Activated CD8-positive, alpha-beta T cell treated with anti-CD3 and anti-CD28 coated beads, Interleukin-2, amount 10 ng/mL, durations not matched to agents 7 days and 5 days (primary cell): ENCODE measurements at regions of chr7 and their contacts with region 1.

Region 1: DNA sequence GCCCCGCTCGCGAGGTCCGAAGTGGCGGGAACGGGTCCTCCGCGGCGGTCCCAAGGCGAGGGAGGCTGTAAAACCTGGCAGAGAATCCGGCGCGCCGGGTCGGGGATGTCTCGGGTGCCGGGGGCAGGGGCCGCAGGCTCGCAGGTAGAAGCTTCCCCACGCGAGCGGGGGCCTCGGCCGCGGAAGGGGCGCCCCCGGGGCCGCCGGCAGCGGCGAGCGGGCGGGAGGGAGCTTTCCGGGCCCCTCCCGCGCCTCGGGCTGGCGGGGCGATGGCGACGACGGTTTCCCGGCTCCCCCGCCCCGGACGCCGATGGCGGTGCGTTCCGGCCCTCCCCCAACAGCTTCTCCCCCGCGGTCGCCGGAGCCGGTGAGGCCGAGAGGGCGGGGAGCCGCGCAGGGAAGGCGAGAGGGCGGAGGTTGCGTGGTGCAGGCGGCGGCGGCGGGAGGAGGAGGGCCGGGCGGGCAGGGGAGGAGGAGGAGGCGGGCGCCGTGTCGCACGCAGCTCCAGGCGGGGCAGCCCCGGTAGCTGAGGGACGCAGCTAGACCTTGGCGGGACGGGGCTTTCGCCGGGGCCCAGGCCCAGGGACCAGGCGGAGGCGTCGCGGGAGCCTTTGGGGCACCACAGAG is at the start of gene CUL1:
- DNase-seq: peak; percentile 85
- ATAC-seq: peak; percentile 87
- H3K4me3 Mint-ChIP-seq: peak within 1 kb of the TSS; percentile 90
- H3K27ac Mint-ChIP-seq: peak within 1 kb of the TSS; percentile 90
- H3K4me1 Mint-ChIP-seq: peaks cover 52% of the 10 kb centered on the region
- H3K27me3 Mint-ChIP-seq: peaks cover 11% of the 10 kb centered on the region
- total RNA-seq, gene CUL1: 55.8 to 57.6 TPM

Region 2: GRCh38 chr7:148676291-148676690 is 22.2 kb before region 1 on chr7:
- CTCF ChIA-PET with region 1: no interaction called
- POLR2A ChIA-PET with region 1: no interaction called
- DNase-seq: no peak
- ATAC-seq: no peak
- H3K4me3 Mint-ChIP-seq: no peak overlapping the region
- H3K27ac Mint-ChIP-seq: no peak overlapping the region
- H3K4me1 Mint-ChIP-seq: peaks cover 9% of the 10 kb centered on the region
- H3K27me3 Mint-ChIP-seq: peaks cover 23% of the 10 kb centered on the region

Region 3: DNA sequence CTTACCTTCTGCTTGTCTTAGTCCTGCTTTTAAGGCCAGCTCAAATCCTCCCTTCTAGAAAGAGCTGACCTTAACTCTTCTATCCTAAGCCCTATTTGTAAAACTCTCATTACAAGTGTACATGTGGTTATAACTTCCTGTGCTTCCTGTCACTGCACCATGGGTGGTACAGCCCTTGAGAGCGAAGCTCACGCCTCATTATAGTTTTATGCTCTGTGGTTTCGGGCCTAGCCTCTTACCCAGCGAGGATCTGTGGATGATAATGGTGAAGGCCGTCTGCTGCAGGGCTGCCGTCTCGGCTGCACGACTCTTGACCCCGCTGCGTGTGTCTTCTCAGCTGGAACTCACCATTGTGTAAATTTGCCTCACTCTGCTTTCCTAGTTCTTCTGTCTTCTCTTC is 74.8 kb after region 1 on chr7:
- CTCF ChIA-PET with region 1: interaction called, 4 read pairs
- POLR2A ChIA-PET with region 1: interaction called, 11 read pairs
- DNase-seq: peak; percentile 78
- ATAC-seq: peak; percentile 98
- H3K4me3 Mint-ChIP-seq: peak overlapping the region; percentile 17
- H3K27ac Mint-ChIP-seq: peak overlapping the region; percentile 86
- H3K4me1 Mint-ChIP-seq: peaks cover 27% of the 10 kb centered on the region
- H3K27me3 Mint-ChIP-seq: no peaks in the 10 kb centered on the region